ENCODE measurements at regions of chr7 and their contacts with region 1.

Region 1: DNA sequence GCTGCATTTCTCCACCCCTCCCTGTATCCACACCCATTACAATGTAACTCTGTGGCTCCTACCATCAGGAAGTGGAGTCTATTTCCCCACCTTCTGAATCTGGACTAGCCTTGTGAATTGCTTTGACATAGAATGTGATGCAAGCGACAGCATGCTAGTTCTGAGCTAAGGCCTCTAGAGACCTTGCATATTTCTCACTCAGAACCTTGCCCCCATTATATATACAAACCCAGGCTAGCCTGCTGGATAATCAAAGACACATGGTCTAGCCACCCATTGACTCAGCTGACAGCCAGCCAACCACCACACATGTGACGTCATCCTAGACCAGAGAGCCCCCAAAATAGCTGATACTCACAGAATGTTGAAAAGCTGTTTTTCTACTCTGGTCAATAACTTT is 77.9 kb downstream of the CCDC71L start:
- DNase-seq: no peak
- ATAC-seq: no peak
- H3K4me3 ChIP-seq: no peak overlapping the region
- H3K27ac ChIP-seq: no peak overlapping the region
- H3K4me1 ChIP-seq: no peaks in the 10 kb centered on the region
- H3K27me3 ChIP-seq: no peaks in the 10 kb centered on the region
- CTCF ChIP-seq: no peak

Region 2: GRCh38 chr7:105723572-105723971 is 859.5 kb before region 1 on chr7:
- CTCF ChIA-PET with region 1: interaction called, 12 read pairs
- POLR2A ChIA-PET with region 1: no interaction called
- intact Hi-C with region 1: no loop called
- DNase-seq: no peak
- ATAC-seq: no peak
- H3K4me3 ChIP-seq: no peak overlapping the region
- H3K27ac ChIP-seq: no peak overlapping the region
- H3K4me1 ChIP-seq: peaks cover 10% of the 10 kb centered on the region
- H3K27me3 ChIP-seq: no peaks in the 10 kb centered on the region
- CTCF ChIP-seq: no peak

Measured in PC-3 (cell line).